ENCODE measurements at regions of chr16 and their contacts with region 1.

Region 1: DNA sequence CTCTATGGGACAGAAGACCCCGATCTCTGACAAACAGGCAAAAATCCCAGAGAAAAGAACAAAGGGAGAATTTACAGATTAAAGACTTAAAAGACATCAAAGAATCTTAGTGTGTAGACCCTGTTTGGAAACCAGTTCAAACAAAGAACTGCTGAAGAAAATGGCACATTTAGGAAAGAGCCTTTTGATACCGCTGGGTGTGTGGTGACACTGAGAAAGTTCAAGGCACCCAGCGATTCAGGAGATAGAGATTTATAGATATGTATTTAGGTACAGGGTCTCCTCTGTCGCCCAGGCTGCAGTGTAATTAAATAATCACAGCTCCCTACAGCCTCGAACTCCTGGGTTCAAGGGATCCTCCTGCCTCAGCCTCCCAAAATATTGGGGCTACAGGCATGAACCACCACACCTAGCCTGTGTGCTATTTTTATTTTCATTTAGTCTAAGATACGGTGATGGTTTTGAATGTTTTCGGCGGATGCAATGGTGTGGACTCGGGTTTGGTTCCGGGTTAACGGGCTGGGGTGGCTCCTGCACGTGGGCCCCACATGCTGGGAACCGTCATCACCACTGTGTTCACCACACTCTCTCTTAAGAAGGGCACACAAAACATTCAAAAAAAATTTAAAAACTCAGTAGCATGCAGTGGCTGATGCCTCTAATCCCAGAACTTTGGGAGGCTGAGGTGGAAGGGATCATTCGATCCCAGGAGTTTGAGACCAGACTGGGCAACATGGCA is 114.0 kb downstream of the ZNF778 start:
- DNase-seq: no peak
- H3K4me3 ChIP-seq: no peak overlapping the region; the same call in 1 of the 2 replicates
- H3K27ac ChIP-seq: peak overlapping the region; percentile 48
- H3K4me1 ChIP-seq: peaks cover 79% of the 10 kb centered on the region
- H3K27me3 ChIP-seq: no peaks in the 10 kb centered on the region
- CTCF ChIP-seq: no peak

Region 2: GRCh38 chr16:89246383-89246902 is 85.1 kb before region 1 on chr16:
- CTCF ChIA-PET with region 1: interaction called, 11 read pairs
- POLR2A ChIA-PET with region 1: no interaction called
- intact Hi-C with region 1: no loop called
- DNase-seq: no peak
- H3K4me3 ChIP-seq: peak overlapping the region; percentile 80; the same call in 1 of the 2 replicates
- H3K27ac ChIP-seq: no peak overlapping the region
- H3K4me1 ChIP-seq: no peaks in the 10 kb centered on the region
- H3K27me3 ChIP-seq: no peaks in the 10 kb centered on the region
- CTCF ChIP-seq: no peak

Region 3: DNA sequence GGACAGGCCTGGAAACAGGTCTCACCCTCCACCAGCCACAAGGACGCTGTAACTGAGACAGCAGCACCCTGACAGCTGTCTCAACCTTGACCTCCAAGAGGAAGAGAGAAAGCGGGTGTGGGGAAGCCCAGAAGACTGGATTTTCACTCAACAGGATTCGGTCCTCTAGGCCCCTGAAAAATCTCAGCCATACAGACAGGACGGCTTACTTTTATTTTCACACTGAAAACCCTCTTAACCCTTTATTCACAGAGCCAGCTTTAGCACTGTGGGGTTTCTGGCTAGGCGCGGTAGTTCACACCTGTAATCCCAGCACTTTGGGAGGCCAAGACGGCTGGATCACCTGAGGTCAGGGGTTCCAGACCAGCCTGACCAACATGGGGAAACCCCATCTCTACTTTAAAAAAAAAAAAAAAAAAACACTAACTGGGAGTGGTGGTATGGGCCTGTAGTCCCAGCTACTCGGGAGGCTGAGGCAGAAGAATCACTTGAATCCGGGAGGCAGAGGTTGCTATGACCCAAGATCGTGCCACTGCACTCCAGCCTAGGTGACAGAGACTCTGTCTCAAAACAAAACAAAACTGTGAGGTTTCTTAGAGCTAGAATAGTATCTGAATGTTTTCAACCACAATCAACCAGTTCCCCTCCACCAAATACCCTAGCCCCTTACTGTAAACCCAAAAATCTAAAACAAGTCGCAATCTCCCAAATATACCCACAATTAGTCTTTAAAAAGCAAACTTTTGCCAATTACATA is 153.6 kb after region 1 on chr16:
- CTCF ChIA-PET with region 1: interaction called, 13 read pairs
- POLR2A ChIA-PET with region 1: no interaction called
- intact Hi-C with region 1: no loop called
- DNase-seq: no peak
- H3K4me3 ChIP-seq: no peak overlapping the region
- H3K27ac ChIP-seq: no peak overlapping the region; the same call in 1 of the 2 replicates
- H3K4me1 ChIP-seq: peaks cover 51% of the 10 kb centered on the region
- H3K27me3 ChIP-seq: no peaks in the 10 kb centered on the region
- CTCF ChIP-seq: no peak